Right ventricle myocardium superior (tissue), 1 donor: ENCODE measurements at regions of chr17 and their contacts with region 1.

Region 1: DNA sequence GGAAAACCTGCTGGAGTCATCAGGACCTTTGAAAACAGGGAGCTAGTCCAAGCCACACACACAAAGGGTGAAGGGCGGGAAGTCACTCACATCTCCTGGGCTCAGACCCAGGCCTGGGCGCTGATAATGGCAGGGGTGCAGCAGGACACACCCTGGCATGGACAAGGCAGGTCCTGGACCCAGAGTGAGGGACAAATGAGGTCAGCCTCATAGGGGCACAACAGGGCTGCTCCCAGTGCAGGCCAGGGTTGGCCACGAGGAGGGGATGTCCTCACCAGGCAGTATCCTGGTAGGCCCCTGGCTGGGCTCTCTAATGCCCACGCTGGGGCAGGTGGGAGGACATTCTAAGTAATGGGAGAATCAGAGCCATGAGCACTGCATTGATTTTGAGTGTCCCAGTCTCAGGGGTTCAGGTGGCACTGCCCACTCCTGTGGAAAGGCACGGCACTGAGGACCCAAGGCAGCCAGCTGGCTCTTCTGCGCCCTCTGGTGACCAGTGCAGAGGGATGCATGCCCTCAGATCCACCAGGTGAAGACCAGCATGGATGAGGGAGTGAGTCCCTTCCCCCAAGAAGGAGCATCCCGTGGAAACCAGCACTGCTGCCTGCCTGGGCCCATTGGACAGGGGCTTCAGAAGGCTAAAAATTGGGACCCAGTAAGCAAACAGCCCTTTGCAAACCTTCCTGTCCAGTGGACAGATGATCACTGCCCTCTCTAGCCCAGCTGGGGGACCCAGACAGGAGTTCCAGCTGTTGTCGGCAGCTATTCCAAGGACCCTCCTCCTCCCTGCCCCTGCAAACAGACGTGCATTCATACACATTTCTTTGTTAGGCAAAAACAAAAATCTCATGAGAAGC is 23.4 kb upstream of the SREBF1 start:
- DNase-seq: peak; percentile 79
- ATAC-seq: peak; percentile 95

Region 2: DNA sequence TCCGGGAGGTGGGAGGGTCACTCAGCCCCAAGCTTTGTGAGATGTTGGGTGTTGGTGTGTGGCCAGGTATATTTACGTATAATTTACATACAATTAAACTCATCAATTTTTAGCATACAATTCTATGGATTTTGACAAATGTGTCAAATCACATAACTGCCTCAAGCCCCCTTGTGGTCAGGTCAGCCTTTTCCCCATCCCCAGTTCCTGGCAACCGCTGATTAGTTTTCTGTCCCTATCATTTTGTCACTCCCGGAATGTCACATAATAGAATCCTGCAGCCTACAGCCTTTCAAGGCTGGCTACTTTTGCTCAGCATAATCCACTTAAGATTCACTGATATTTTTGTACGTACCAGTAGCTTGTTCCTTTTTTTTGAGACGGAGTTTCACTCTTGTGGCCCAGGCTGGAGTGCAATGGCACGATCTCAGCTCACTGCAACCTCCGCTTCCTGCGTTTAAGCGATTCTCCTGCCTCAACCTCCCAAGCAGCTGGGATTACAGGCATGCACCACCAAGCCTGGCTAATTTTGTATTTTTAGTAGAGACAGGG is 198.2 kb before region 1 on chr17:
- intact Hi-C with region 1: no loop called
- DNase-seq: no peak
- ATAC-seq: no peak

Region 3: GRCh38 chr17:17681187-17681848 is 178.8 kb before region 1 on chr17 and contains the start of gene RAI1:
- intact Hi-C with region 1: loop called (anchors 5 kb)
- DNase-seq: peak; percentile 86
- ATAC-seq: peak; percentile 75
- total RNA-seq, gene RAI1: 28.3 TPM

Region 4: DNA sequence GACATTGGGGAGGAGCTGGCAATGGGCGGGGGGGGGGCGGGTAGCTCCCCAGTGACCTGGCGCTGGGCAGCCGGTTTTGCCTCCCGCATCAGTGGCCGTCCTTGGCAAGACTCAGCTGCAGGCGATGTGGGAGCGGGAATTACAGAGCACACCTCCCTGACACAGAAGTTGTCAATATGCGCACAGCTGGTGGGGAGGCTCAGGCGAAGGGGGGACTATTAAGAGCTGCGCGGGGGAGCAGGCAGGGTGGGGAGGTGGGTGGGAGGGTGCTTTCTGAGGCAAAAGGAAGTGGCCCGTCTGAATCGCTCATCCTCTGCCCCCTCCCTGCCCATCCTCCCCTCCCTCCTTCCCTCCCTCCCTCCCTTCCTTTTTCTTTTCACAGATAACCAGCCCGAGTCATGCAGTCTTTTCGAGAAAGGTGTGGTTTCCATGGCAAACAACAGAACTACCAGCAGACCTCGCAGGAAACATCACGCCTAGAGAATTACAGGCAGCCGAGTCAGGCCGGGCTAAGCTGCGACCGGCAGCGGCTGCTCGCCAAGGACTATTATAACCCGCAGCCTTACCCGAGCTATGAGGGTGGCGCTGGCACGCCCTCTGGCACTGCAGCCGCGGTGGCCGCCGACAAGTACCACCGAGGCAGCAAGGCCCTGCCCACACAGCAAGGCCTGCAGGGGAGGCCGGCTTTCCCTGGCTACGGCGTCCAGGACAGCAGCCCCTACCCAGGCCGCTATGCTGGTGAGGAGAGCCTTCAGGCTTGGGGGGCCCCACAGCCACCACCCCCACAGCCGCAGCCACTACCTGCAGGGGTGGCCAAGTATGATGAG is 67.4 kb before region 1 on chr17:
- intact Hi-C with region 1: no loop called
- DNase-seq: peak; percentile 75
- ATAC-seq: peak; percentile 68

Region 5: GRCh38 chr17:17812211-17813057 is 47.7 kb before region 1 on chr17:
- intact Hi-C with region 1: loop called (anchors 1 kb)
- DNase-seq: peak; percentile 87
- ATAC-seq: peak; percentile 55

Region 6: GRCh38 chr17:17823433-17824118 is 36.6 kb before region 1 on chr17:
- intact Hi-C with region 1: loop called (anchors 5 kb)
- DNase-seq: peak; percentile 92
- ATAC-seq: peak; percentile 89

Region 7: DNA sequence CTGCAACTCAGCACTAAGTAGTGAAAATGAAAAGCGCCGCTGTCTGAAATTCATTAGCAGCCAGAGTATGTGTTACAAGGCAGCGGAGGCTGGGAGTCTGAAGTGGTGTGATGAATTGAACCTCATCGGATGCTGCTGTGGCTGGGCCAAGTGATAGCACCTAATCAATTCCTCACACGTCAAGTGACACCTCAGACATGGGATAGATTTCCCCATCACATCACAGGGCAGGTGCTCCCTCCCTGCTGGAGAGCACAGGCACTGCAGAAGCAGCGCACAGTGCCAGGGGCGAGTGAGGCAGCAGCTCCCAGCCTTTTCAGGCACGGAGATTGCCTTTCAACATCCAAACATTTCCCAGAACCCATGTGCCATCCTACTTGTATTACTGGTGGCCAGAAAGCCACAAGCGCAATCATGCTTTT is 144.8 kb after region 1 on chr17:
- intact Hi-C with region 1: no loop called
- DNase-seq: no peak
- ATAC-seq: peak; percentile 74

Region 8: DNA sequence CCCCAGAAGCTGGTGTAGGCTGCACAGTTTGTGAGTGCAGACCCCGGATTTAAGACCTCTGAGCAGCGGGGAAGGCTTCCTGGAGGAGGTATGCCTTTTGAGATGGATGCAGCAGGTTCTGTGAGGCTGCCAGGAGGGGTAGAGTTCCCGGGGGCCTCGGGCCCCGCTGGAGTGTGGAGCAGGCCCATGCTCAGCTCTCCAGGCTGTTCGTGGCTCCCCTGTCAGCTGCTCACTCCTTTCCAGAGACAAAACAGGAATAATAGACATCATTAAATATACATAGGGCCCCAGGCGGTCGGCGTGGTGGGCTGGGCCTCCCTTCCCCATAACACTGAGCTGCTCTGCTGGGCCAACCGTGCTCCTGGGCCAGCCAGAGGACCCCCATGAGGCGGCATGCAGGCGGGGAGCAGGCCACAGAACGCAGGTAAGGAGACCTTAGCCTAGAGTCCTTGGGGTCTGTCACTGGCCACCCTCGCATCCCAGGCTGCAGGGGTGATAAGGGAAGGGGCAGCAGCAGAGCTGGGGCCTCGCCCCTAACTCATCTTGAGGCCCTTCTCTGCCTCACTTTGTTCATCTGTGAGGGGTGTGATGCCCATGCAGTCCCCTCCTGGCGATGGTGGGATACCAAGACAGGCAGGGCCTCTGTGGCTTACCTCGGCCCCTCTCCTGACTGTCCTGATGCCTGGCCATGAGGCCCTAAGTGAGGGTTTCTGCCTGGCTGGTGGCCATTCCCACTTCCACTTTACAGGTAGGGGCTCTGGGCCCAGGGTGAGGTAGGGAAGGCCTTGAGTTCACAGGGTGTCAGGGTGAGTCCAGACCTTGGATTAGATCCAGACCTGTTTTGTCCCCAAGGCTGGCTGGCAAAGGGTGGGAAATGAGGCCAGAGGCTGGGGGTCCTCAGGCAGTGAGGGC is 248.5 kb after region 1 on chr17 and contains the start of gene MYO15A:
- intact Hi-C with region 1: no loop called
- DNase-seq: no peak
- ATAC-seq: peak; percentile 11
- total RNA-seq, gene MYO15A: 0.11 TPM